HepG2 (cell line): ENCODE measurements at regions of chr1 and their contacts with region 1.

Region 1: DNA sequence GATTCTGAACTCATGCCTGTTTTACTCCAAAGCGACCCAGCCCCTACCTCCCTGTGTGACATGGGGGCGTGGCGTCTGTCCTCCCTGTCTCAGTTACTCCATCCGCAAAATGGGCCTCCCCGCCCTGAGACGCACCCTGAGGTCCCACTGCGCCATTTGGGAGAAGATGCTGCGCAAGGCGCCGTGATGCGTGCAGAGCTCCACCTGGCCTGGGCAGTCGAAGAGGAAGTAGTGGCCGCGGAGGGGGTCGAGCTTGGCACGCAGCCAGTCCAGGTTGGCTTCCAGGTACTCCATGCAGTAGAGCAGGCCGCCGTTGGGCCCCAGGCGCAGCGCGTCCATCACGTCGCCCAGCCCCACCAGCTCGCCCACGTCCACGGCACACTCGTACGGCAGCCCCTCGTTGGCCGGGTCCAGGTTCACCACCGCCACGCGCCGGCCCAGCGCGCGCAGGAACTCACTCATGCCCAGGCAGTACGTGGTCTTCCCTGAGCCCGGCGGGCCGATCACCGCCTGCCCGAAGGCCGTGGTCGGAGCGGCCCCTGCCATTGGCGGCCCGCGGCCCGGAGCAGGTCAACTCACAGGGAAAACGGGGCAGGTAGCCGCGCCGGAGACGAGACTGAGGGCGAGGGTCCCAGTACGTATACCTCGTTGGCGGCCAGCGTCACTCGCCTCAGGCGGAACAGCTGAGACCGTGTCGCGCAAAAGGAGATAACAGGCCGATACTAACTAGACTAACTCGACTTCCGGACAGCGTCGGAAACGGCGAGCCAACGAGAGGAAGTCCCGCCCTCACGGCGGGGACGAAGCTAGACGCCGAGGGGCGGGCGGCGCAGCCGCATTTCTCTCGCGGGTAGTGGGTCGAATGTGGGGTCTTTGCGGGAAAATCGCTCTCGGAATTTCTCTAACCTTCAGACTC is at the start of gene GPN2:
- DNase-seq: peak; percentile 73
- ATAC-seq: peak; percentile 94
- H3K4me3 ChIP-seq: peak within 1 kb of the TSS; percentile 80 to 99 (median 95)
- H3K27ac ChIP-seq: peak within 1 kb of the TSS; percentile 84
- H3K4me1 ChIP-seq: peaks cover 32% of the 10 kb centered on the region
- H3K27me3 ChIP-seq: no peaks in the 10 kb centered on the region
- CTCF ChIP-seq: no peak; the same call in 1 of the 2 replicates
- EP300 ChIP-seq: no peak; a peak in 1 of 4 replicates
- POLR2A ChIP-seq: peak; percentile 79 to 85
- RAD21 ChIP-seq: no peak
- total RNA-seq, gene GPN2: 19.3 and 22.9 TPM in 2 replicates

Region 2: GRCh38 chr1:26864610-26865527 is 24.9 kb before region 1 on chr1:
- CTCF ChIA-PET with region 1: no interaction called
- POLR2A ChIA-PET with region 1: interaction called, 17 read pairs
- in situ Hi-C with region 1: no loop called
- intact Hi-C with region 1: no loop called
- DNase-seq: peak; percentile 93
- ATAC-seq: peak; percentile 94
- H3K4me3 ChIP-seq: peak overlapping the region; percentile 70 to 79 (median 70)
- H3K27ac ChIP-seq: peak overlapping the region; percentile 79
- H3K4me1 ChIP-seq: peaks cover 63% of the 10 kb centered on the region
- H3K27me3 ChIP-seq: no peaks in the 10 kb centered on the region
- CTCF ChIP-seq: no peak; the same call in 1 of the 2 replicates
- EP300 ChIP-seq: no peak
- POLR2A ChIP-seq: peak; percentile 97
- RAD21 ChIP-seq: peak; percentile 7; the same call in 1 of the 2 replicates

Region 3: DNA sequence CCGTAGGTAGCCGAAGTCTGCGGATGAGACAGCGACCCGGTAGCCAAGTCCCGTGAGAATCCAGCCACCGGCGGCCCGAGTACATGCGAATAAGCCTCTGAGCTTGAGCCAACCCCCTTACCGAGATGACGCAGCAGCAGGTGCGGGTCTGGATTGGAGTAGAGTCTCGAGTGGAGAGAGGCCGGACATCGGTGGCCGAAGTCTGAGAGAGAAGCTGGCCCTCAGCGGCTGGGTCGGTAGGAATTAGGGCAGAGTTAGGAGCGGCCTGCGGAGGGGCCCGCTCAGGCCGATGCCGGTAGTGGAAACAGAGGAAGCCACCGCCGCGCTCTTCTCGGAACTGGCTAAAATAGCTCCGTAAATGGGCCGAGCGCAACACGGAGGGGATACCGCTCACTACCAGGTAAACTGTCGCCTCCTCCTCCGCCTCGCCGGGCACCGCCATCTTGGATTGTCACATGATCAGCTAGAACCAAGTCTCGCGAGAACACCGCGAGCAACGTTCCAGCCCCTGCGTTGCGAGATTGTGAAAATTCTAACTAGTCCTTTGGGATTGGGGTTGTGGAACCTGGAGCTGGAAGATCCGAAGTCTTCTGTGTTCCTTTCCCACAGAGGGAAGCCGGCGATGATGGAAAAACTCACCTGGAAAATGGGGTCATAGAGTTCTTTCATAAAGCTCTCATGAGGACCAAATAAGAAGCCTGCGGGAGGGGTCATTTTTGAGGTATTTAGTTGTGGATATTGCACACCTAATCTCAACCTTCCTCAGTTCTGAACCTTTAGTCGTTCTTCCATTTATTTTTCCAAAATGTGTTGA is 10.4 kb after region 1 on chr1 and contains the start of gene GPATCH3:
- CTCF ChIA-PET with region 1: no interaction called
- POLR2A ChIA-PET with region 1: interaction called, 62 read pairs
- in situ Hi-C with region 1: no loop called
- intact Hi-C with region 1: no loop called
- DNase-seq: peak; percentile 88
- ATAC-seq: peak; percentile 89
- H3K4me3 ChIP-seq: peak within 1 kb of the TSS; percentile 76 to 94 (median 89)
- H3K27ac ChIP-seq: peak within 1 kb of the TSS; percentile 89
- H3K4me1 ChIP-seq: peaks cover 47% of the 10 kb centered on the region
- H3K27me3 ChIP-seq: no peaks in the 10 kb centered on the region; a peak in 1 of 5 replicates
- CTCF ChIP-seq: no peak
- EP300 ChIP-seq: peak in 1 of 2 experiments; percentile 36; a peak in 1 of 4 replicates
- POLR2A ChIP-seq: peak; percentile 79 to 98
- RAD21 ChIP-seq: no peak; the same call in none of the 2 replicates
- total RNA-seq, gene GPATCH3: 11.0 and 12.5 TPM in 2 replicates

Region 4: GRCh38 chr1:26907071-26907917 is 17.5 kb after region 1 on chr1:
- CTCF ChIA-PET with region 1: no interaction called
- POLR2A ChIA-PET with region 1: interaction called, 65 read pairs
- in situ Hi-C with region 1: no loop called
- intact Hi-C with region 1: no loop called
- DNase-seq: peak; percentile 77
- ATAC-seq: peak; percentile 61
- H3K4me3 ChIP-seq: no peak overlapping the region
- H3K27ac ChIP-seq: peak overlapping the region; percentile 22
- H3K4me1 ChIP-seq: peaks cover 73% of the 10 kb centered on the region
- H3K27me3 ChIP-seq: no peaks in the 10 kb centered on the region; a peak in 1 of 5 replicates
- CTCF ChIP-seq: no peak
- EP300 ChIP-seq: no peak
- POLR2A ChIP-seq: no peak
- RAD21 ChIP-seq: no peak

Region 5: GRCh38 chr1:26938004-26938658 is 48.3 kb after region 1 on chr1:
- CTCF ChIA-PET with region 1: no interaction called
- POLR2A ChIA-PET with region 1: interaction called, 32 read pairs
- in situ Hi-C with region 1: no loop called
- intact Hi-C with region 1: no loop called
- DNase-seq: peak; percentile 98
- ATAC-seq: peak; percentile 97
- H3K4me3 ChIP-seq: peak overlapping the region in 1 of 3 experiments; percentile 19; a peak in 2 of 6 replicates
- H3K27ac ChIP-seq: peak overlapping the region; percentile 84
- H3K4me1 ChIP-seq: peaks cover 51% of the 10 kb centered on the region
- H3K27me3 ChIP-seq: no peaks in the 10 kb centered on the region
- CTCF ChIP-seq: peak; percentile 48
- EP300 ChIP-seq: peak in 1 of 2 experiments; percentile 88; a peak in 2 of 4 replicates
- POLR2A ChIP-seq: peak; percentile 25 to 51; a peak in 2 of 4 replicates
- RAD21 ChIP-seq: no peak; the same call in 1 of the 2 replicates

Region 6: GRCh38 chr1:26949266-26949925 is 59.6 kb after region 1 on chr1:
- CTCF ChIA-PET with region 1: no interaction called
- POLR2A ChIA-PET with region 1: interaction called, 15 read pairs
- in situ Hi-C with region 1: no loop called
- intact Hi-C with region 1: no loop called
- DNase-seq: no peak
- ATAC-seq: no peak
- H3K4me3 ChIP-seq: no peak overlapping the region
- H3K27ac ChIP-seq: peak overlapping the region; percentile 63
- H3K4me1 ChIP-seq: peaks cover 68% of the 10 kb centered on the region
- H3K27me3 ChIP-seq: no peaks in the 10 kb centered on the region
- CTCF ChIP-seq: no peak
- EP300 ChIP-seq: no peak
- POLR2A ChIP-seq: no peak
- RAD21 ChIP-seq: no peak